T-cell (primary cell): ENCODE measurements at regions of chr1 and their contacts with region 1.

Region 1: DNA sequence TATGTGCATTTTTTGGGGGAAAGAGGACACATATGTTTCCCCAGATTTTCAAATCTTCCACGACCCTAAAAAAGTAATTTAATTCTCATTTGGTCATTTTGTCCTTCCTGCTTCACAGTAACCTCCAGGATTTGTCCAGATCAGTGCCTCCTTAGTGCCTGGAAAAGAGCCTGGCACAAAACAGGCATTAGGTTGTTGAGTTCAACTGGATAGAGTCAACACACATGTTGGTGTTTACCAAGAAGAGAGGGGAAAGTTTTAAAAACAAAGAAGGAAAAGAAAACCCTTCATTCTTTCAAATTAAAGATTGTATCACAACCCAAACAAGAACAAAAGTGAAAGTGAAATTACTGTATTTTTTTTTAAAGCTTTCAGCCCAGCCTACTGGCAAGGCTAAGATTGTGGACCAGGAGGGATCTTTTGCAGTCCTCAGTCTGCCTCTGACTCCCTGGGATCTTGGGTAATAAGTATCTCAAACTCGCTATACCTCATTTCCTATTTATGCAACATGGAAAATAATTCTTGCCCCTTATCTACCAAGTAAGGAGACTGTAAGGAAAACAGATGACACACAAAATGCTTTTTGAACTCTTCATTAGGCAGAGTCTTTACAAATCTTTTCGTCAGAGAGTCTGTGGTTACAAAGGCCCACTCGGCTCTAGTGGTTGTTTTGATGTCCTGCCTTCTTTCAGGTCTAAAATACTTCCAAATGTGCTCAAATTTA is 57.8 kb downstream of the ZNF281 start:
- DNase-seq: peak in 9 of 35 experiments; percentile 2 to 46 (median 8)
- ATAC-seq: peak; percentile 61 to 86 (median 74)
- H3K4me3 ChIP-seq: peak overlapping the region in 1 of 2 donors; percentile 25
- H3K4me3 Mint-ChIP-seq: peak overlapping the region; percentile 65 to 73 (median 66)
- H3K27ac ChIP-seq: peak overlapping the region; percentile 71
- H3K27ac Mint-ChIP-seq: peak overlapping the region; percentile 89 to 95
- H3K4me1 ChIP-seq: peaks cover 18 to 19% of the 10 kb centered on the region in 2 experiments
- H3K4me1 Mint-ChIP-seq: peaks cover 30 to 32% (median 31%) of the 10 kb centered on the region in 3 donors
- H3K27me3 ChIP-seq: no peaks in the 10 kb centered on the region
- H3K27me3 Mint-ChIP-seq: no peaks in the 10 kb centered on the region

Region 2: DNA sequence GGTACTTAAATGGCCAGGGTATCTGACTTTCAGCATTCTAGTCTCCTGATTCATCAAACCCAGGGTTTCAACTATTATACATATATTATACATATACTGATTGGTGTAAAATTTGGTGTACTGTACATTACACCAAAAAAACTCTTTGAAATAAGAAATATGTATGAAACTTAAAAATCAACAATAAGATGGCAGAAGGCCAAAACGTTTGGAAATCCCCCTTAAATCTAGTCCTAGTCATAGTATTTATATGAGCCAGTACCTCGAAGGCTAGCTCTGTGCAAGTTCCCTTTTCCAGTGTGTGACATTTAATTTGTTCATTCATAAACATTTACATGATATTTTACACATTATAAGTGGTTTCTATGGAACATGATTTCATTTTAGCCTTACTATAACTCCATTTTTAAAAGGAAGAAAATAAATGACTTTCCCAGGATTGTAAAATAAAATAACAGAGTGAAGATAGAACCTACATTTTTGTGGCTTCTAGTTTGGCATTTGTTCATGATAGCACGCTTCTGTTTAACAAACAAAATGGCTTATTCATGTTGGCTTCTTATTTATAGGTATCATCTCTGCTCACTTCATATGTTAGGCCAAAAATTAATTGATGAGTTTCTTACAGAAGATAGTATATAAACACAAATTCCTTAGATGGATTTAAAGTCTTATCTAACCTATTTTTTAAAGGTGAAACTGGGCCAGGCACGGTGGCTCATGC is 76.7 kb after region 1 on chr1:
- CTCF ChIA-PET with region 1: no interaction called
- POLR2A ChIA-PET with region 1: interaction called in 1 of 2 experiments, 13 read pairs
- DNase-seq: no peak
- ATAC-seq: no peak
- H3K4me3 ChIP-seq: no peak overlapping the region
- H3K4me3 Mint-ChIP-seq: no peak overlapping the region
- H3K27ac ChIP-seq: no peak overlapping the region
- H3K27ac Mint-ChIP-seq: no peak overlapping the region
- H3K4me1 ChIP-seq: no peaks in the 10 kb centered on the region
- H3K4me1 Mint-ChIP-seq: peaks cover 0 to 3% (median 0%) of the 10 kb centered on the region in 3 donors
- H3K27me3 ChIP-seq: peaks cover 0 to 3% of the 10 kb centered on the region in 2 experiments
- H3K27me3 Mint-ChIP-seq: peaks cover 0 to 4% of the 10 kb centered on the region in 2 donors